CD4-positive, alpha-beta T cell (primary cell): ENCODE measurements at regions of chr1 and their contacts with region 1.

Region 1: GRCh38 chr1:225866061-225866837 is 15.9 kb downstream of the TMEM63A start:
- DNase-seq: peak; percentile 46 to 87 (median 71)
- ATAC-seq: peak; percentile 93
- H3K4me3 ChIP-seq: peak overlapping the region; percentile 10
- H3K4me3 Mint-ChIP-seq: peak overlapping the region; percentile 56
- H3K27ac ChIP-seq: peak overlapping the region; percentile 51 to 64
- H3K27ac Mint-ChIP-seq: peak overlapping the region; percentile 87
- H3K4me1 ChIP-seq: peaks cover 48% of the 10 kb centered on the region
- H3K4me1 Mint-ChIP-seq: peaks cover 52% of the 10 kb centered on the region
- H3K27me3 ChIP-seq: no peaks in the 10 kb centered on the region
- H3K27me3 Mint-ChIP-seq: no peaks in the 10 kb centered on the region
- CTCF ChIP-seq: no peak

Region 2: GRCh38 chr1:225923692-225924555 is 57.7 kb after region 1 on chr1 and contains the start of gene PYCR2:
- CTCF ChIA-PET with region 1: no interaction called
- POLR2A ChIA-PET with region 1: interaction called, 13 read pairs
- intact Hi-C with region 1: no loop called
- DNase-seq: peak; percentile 87 to 98 (median 93)
- ATAC-seq: peak; percentile 98
- H3K4me3 ChIP-seq: peak within 1 kb of the TSS; percentile 95
- H3K4me3 Mint-ChIP-seq: peak within 1 kb of the TSS; percentile 95
- H3K27ac ChIP-seq: peak within 1 kb of the TSS; percentile 79 to 89
- H3K27ac Mint-ChIP-seq: peak within 1 kb of the TSS; percentile 98
- H3K4me1 ChIP-seq: peaks cover 74% of the 10 kb centered on the region
- H3K4me1 Mint-ChIP-seq: peaks cover 54% of the 10 kb centered on the region
- H3K27me3 ChIP-seq: no peaks in the 10 kb centered on the region
- H3K27me3 Mint-ChIP-seq: no peaks in the 10 kb centered on the region
- CTCF ChIP-seq: no peak
- total RNA-seq, gene PYCR2: 24.1 to 26.2 TPM

Region 3: DNA sequence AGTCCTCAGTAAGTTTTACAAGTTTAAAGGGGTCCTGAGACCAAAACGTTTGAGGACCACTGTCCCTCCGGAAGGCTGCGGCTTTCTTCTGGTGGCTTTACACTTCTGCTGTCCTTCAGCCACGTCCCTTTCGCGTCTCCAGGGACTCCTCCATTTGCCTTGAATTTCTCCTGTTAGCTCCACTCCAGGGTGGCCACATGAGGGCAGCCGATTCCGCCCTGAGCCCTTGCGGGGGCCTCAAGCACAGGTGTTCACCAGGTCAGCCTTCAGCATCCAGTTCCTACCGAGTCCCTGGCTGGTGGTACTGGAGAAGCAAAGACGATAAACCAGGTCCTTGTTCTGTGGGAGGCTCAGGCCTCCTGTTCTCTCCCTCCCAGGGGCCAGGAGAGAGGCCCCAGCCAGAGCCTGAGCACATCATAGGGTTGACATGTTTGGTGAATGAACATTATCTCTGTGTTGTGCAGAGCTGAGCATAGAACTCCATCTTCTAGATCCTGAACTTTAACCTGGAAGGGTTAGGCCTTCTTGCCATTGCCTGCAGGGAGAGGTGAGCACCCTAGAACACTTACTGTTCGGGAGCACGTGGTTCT is 1046.4 kb after region 1 on chr1:
- CTCF ChIA-PET with region 1: no interaction called
- POLR2A ChIA-PET with region 1: no interaction called
- intact Hi-C with region 1: no loop called
- DNase-seq: peak; percentile 7 to 66 (median 32)
- ATAC-seq: peak; percentile 58
- H3K4me3 ChIP-seq: no peak overlapping the region
- H3K4me3 Mint-ChIP-seq: no peak overlapping the region
- H3K27ac ChIP-seq: no peak overlapping the region
- H3K27ac Mint-ChIP-seq: no peak overlapping the region
- H3K4me1 ChIP-seq: peaks cover 2% of the 10 kb centered on the region
- H3K4me1 Mint-ChIP-seq: no peaks in the 10 kb centered on the region
- H3K27me3 ChIP-seq: no peaks in the 10 kb centered on the region
- H3K27me3 Mint-ChIP-seq: no peaks in the 10 kb centered on the region
- CTCF ChIP-seq: peak; percentile 54